Sigmoid colon (tissue), 7 donors: ENCODE measurements at regions of chr3 and their contacts with region 1.

Region 1: GRCh38 chr3:183285828-183286457 is 32.9 kb downstream of the B3GNT5 start:
- DNase-seq: peak; percentile 93
- H3K4me3 ChIP-seq: no peak overlapping the region
- H3K27ac ChIP-seq: peak overlapping the region; percentile 19 to 66 (median 62)
- H3K4me1 ChIP-seq: peaks cover 0 to 24% (median 11%) of the 10 kb centered on the region in 4 donors
- H3K27me3 ChIP-seq: no peaks in the 10 kb centered on the region
- CTCF ChIP-seq: no peak
- EP300 ChIP-seq: peak in 2 of 4 donors; percentile 16 to 29
- POLR2A ChIP-seq: no peak

Region 2: GRCh38 chr3:182713743-182714517 is 572.0 kb before region 1 on chr3:
- intact Hi-C with region 1: no loop called
- DNase-seq: no peak
- H3K4me3 ChIP-seq: no peak overlapping the region
- H3K27ac ChIP-seq: no peak overlapping the region
- H3K4me1 ChIP-seq: no peaks in the 10 kb centered on the region
- H3K27me3 ChIP-seq: no peaks in the 10 kb centered on the region
- CTCF ChIP-seq: peak in 3 of 4 experiments; percentile 36 to 60 (median 53)
- EP300 ChIP-seq: no peak
- POLR2A ChIP-seq: no peak

Region 3: GRCh38 chr3:182879031-182879611 is 406.8 kb before region 1 on chr3:
- intact Hi-C with region 1: no loop called
- DNase-seq: no peak
- H3K4me3 ChIP-seq: no peak overlapping the region
- H3K27ac ChIP-seq: no peak overlapping the region
- H3K4me1 ChIP-seq: no peaks in the 10 kb centered on the region
- H3K27me3 ChIP-seq: no peaks in the 10 kb centered on the region
- CTCF ChIP-seq: no peak
- EP300 ChIP-seq: no peak
- POLR2A ChIP-seq: no peak

Region 4: GRCh38 chr3:183158551-183159006 is 127.4 kb before region 1 on chr3:
- intact Hi-C with region 1: no loop called
- DNase-seq: no peak
- H3K4me3 ChIP-seq: no peak overlapping the region
- H3K27ac ChIP-seq: no peak overlapping the region
- H3K4me1 ChIP-seq: peaks cover 0 to 13% (median 10%) of the 10 kb centered on the region in 4 donors
- H3K27me3 ChIP-seq: peaks cover 4 to 23% (median 6%) of the 10 kb centered on the region in 3 donors
- CTCF ChIP-seq: no peak
- EP300 ChIP-seq: no peak
- POLR2A ChIP-seq: no peak

Region 5: DNA sequence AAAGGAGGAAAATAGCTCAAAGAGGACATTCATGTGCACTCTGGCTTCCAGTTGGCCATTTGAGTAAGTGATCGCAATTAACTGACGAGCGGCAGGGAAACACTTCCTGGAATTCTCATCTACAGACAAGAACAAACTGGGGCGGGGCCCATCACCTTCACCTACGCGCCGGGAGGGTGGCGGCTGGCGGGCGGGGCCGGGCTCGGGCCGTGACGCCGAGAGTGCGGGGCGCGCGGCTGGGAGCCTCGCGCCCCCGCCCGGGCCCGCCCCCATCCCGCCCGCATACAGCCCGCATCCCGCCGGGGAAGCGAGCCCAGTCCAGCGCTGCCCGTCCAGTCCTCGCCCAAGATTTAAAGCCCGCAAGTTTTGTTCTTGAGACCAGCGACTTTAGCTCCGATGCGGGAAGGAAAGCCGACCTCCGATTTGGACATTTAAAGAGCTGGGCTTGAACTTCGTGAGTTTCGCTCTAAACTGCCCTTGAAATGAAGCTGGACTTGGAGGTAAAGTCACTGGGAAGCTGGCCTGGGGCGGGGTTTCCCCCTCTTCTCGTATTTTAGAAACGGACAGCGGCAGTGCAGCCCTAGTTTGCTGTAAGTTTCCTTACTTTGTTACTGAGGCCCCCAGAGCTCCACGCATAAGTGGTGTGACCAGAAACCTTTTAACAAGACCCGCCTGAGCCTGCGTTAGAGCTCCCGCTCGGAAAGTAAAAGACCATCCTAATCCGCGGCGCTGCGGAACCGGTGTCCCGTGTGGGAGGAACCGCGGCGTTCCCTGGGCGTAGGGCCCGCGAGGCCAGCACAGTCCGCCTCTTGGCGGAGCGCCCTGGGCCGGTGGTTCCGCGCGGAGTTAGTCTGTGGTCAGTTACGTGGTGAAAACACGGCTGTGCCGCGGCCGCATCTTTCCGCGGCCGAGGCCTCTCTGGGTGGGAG is 32.7 kb before region 1 on chr3 and contains the start of gene B3GNT5:
- intact Hi-C with region 1: loop called (anchors 5 kb)
- DNase-seq: peak; percentile 91
- H3K4me3 ChIP-seq: peak within 1 kb of the TSS; percentile 49 to 87 (median 64)
- H3K27ac ChIP-seq: peak within 1 kb of the TSS; percentile 70 to 84 (median 80)
- H3K4me1 ChIP-seq: peaks cover 0 to 13% (median 9%) of the 10 kb centered on the region in 4 donors
- H3K27me3 ChIP-seq: no peaks in the 10 kb centered on the region
- CTCF ChIP-seq: no peak
- EP300 ChIP-seq: no peak
- POLR2A ChIP-seq: peak in 1 of 2 donors; percentile 28
- total RNA-seq, gene B3GNT5: 2.2 to 4.2 (median 3.2) TPM

Region 6: DNA sequence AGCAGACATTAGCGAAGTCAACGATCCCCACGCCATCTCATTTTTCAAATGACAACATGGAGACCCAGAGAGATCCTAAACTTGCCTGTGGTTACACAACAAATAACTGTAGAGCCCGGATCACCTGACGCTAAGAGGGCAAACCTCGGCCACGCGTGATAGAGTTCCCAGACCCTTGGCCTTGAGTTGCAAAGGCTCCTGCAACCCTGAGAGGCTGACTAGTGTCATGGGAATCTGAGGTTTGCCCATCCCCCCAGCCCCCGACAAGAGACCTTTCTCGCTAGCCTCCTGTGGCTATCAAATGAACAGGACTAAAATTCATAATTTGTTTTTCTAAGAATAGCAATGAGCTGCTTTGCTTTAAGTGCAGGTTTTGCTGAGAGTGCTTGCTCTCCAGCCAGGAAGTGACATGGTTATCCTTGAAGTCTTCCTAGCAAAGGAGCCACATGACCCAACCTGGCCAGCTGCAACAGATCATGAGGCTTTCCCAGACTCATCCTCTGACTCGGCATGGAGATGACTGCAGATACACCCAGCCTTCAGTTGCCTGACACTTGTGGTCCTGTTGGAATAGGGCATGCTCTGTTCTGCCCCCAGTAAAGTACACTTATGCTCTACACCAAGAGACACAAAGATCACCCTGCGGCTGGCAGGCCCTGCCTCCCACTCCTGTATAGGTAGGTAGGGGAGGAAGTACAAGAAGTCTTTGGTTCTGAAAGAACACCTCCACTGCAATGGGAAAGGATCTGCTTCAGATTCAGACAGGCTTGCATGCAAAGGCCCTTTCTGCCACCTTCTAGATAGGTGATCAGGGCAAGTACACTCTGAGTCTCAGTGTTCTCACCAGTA is 106.5 kb after region 1 on chr3:
- intact Hi-C with region 1: no loop called
- DNase-seq: no peak
- H3K4me3 ChIP-seq: no peak overlapping the region
- H3K27ac ChIP-seq: no peak overlapping the region
- H3K4me1 ChIP-seq: no peaks in the 10 kb centered on the region
- H3K27me3 ChIP-seq: peaks cover 0 to 15% (median 3%) of the 10 kb centered on the region in 3 donors
- CTCF ChIP-seq: no peak
- EP300 ChIP-seq: no peak
- POLR2A ChIP-seq: no peak